Activated T-helper 1 cell treated with anti-CD3 and anti-CD28 coated beads, Interleukin-12 subunit alpha, Interleukin-12 subunit beta, Interleukin-2, Interleukin-4 antibody, amounts not matched to agents 30 ng/mL and 10 ng/mL and 1 ng/mL, durations not matched to agents 14 hours and 24 hours and 36 hours (primary cell): ENCODE measurements at regions of chr20 and their contacts with region 1.

Region 1: GRCh38 chr20:43590392-43591323 is at the start of gene IFT52:
- DNase-seq: peak; percentile 85
- H3K4me3 Mint-ChIP-seq: peak within 1 kb of the TSS; percentile 91
- H3K27ac Mint-ChIP-seq: peak within 1 kb of the TSS; percentile 95
- H3K4me1 Mint-ChIP-seq: peaks cover 22% of the 10 kb centered on the region
- H3K27me3 Mint-ChIP-seq: peaks cover 2% of the 10 kb centered on the region
- total RNA-seq, gene IFT52: 18.3 and 18.7 TPM in 2 replicates

Region 2: GRCh38 chr20:43492101-43492500 is 98.6 kb before region 1 on chr20:
- intact Hi-C with region 1: loop called (anchors 1 kb)
- DNase-seq: no peak
- H3K4me3 Mint-ChIP-seq: no peak overlapping the region
- H3K27ac Mint-ChIP-seq: peak overlapping the region; percentile 34
- H3K4me1 Mint-ChIP-seq: peaks cover 7% of the 10 kb centered on the region
- H3K27me3 Mint-ChIP-seq: no peaks in the 10 kb centered on the region

Region 3: GRCh38 chr20:43666376-43667328 is 76.0 kb after region 1 on chr20 and contains the start of gene MYBL2:
- intact Hi-C with region 1: loop called (anchors 1 kb)
- DNase-seq: peak; percentile 71
- H3K4me3 Mint-ChIP-seq: peak within 1 kb of the TSS; percentile 82
- H3K27ac Mint-ChIP-seq: peak within 1 kb of the TSS; percentile 48
- H3K4me1 Mint-ChIP-seq: peaks cover 23% of the 10 kb centered on the region
- H3K27me3 Mint-ChIP-seq: peaks cover 14% of the 10 kb centered on the region
- total RNA-seq, gene MYBL2: 95.1 and 95.5 TPM in 2 replicates

Region 4: DNA sequence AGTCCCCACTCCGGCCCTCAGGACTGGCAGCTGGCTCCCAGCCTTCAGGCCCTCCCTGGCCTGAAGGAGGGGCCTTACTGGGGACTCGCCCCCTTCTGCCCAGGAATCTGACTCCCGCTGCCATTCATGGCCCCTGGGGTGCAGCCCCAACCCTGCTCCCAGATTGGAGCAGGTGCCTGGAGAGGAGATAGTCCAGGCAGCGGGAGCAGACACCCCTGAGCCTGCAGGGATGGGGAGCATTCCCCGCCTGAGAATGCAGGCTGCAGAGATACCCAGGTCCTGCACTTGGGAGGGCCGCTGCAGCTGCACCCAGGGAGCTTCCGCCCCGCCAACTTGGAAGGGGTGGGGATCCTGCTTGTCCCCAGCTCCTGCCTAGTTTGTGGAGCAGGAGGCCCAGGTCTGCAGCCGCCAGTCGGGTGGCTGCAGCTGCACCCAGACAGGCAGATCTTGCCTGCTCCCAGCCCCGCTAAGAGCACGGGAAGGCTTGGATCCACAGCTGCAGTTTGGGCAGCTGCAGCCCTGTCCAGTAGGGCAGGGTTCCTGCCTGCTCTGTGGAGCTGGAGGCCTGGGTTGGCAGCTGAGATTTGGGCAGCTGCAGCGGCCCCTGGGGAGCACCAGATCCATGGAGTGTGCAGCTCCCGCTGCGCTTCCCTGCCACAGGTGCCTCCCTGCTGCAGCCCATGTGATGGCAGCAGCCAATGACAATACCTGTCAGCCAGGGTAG is 130.9 kb after region 1 on chr20:
- intact Hi-C with region 1: loop called (anchors 1 kb)
- DNase-seq: no peak
- H3K4me3 Mint-ChIP-seq: peak overlapping the region; percentile 65
- H3K27ac Mint-ChIP-seq: peak overlapping the region; percentile 85
- H3K4me1 Mint-ChIP-seq: peaks cover 34% of the 10 kb centered on the region
- H3K27me3 Mint-ChIP-seq: no peaks in the 10 kb centered on the region

Region 5: DNA sequence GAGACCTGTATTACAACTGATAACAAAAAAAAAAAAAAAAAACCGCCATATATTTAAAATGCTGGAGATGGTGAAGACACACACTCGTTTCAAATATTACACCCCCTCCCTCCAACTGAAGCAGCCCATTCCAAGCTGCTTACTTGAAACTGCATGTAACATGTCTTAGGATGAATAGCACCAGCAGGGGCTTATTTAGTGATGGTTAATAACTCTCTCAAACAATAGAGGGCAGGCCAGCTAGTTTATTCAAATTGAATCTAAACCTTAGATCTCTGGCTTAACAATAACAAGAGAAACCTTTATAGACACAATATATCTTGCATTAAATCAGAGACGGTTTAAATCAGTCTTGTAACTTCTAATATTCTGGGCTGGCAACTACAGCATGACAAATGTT is 605.6 kb after region 1 on chr20:
- intact Hi-C with region 1: loop called (anchors 5 kb)
- DNase-seq: no peak
- H3K4me3 Mint-ChIP-seq: no peak overlapping the region
- H3K27ac Mint-ChIP-seq: no peak overlapping the region
- H3K4me1 Mint-ChIP-seq: peaks cover 17% of the 10 kb centered on the region
- H3K27me3 Mint-ChIP-seq: no peaks in the 10 kb centered on the region